Mammary epithelial cell (primary cell): ENCODE measurements at regions of chr5 and their contacts with region 1.

Region 1: DNA sequence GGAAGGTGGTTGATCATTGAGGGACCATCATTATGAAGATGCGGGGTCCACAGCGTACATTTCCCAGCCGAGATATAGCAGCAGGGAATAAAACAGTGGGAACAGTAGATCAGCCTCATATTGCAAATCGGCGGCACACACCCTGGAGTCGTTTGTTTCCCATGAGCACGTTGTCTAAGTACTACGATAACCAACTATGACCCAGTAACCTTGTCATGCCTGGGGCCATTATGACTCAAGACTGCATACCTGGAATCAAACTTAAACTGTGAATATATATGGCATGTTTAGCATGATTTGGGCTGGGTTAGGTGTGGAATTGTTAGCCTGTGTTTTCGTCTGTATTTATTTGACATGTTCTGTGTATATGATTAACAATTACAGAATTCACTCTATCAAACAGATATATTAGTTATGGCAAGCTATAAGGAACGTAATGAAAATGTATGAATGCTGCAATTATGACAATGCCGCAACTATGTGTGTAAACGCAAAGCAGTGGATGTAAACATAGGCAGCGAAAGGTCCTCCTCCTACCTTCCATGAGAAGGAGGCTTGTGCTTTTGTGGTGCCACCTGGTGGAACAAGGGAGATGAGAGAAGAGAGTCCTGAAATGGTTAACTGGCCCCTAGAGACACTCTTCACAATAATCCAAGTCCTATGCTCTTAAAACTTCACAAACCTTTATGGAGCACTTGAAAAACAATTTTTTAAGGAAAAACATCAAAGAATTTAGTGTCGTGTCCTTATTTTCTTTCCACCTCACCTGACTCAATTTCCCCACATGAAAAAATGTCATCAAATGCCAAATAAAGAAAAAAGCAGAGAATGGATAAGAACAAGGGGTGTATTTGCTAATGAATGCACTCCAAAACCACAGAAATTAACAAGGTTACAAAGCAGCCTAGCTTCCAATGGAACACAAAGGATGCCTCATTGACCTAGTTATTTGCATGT is 47.1 kb downstream of the SEMA5A start:
- DNase-seq: peak; percentile 47
- H3K4me3 ChIP-seq: no peak overlapping the region
- H3K27ac ChIP-seq: no peak overlapping the region
- H3K4me1 ChIP-seq: no peaks in the 10 kb centered on the region
- H3K27me3 ChIP-seq: no peaks in the 10 kb centered on the region
- CTCF ChIP-seq: peak; percentile 52 to 80

Region 2: GRCh38 chr5:9156282-9156681 is 342.5 kb before region 1 on chr5:
- CTCF ChIA-PET with region 1: no interaction called
- dilution Hi-C with region 1: no loop called
- in situ Hi-C with region 1: no loop called
- intact Hi-C with region 1: loop called (anchors 1 kb)
- DNase-seq: peak; percentile 46
- H3K4me3 ChIP-seq: no peak overlapping the region
- H3K27ac ChIP-seq: no peak overlapping the region
- H3K4me1 ChIP-seq: no peaks in the 10 kb centered on the region
- H3K27me3 ChIP-seq: no peaks in the 10 kb centered on the region
- CTCF ChIP-seq: peak; percentile 62 to 81

Region 3: GRCh38 chr5:9297134-9297533 is 201.7 kb before region 1 on chr5:
- CTCF ChIA-PET with region 1: interaction called, 11 read pairs
- dilution Hi-C with region 1: no loop called
- in situ Hi-C with region 1: no loop called
- intact Hi-C with region 1: no loop called
- DNase-seq: peak; percentile 9
- H3K4me3 ChIP-seq: no peak overlapping the region
- H3K27ac ChIP-seq: no peak overlapping the region
- H3K4me1 ChIP-seq: peaks cover 3% of the 10 kb centered on the region
- H3K27me3 ChIP-seq: no peaks in the 10 kb centered on the region
- CTCF ChIP-seq: no peak

Region 4: GRCh38 chr5:9361835-9362234 is 137.0 kb before region 1 on chr5:
- CTCF ChIA-PET with region 1: no interaction called
- dilution Hi-C with region 1: no loop called
- in situ Hi-C with region 1: no loop called
- intact Hi-C with region 1: loop called (anchors 1 kb)
- DNase-seq: peak; percentile 66
- H3K4me3 ChIP-seq: no peak overlapping the region
- H3K27ac ChIP-seq: no peak overlapping the region
- H3K4me1 ChIP-seq: peaks cover 11% of the 10 kb centered on the region
- H3K27me3 ChIP-seq: no peaks in the 10 kb centered on the region
- CTCF ChIP-seq: peak; percentile 85 to 92

Region 5: DNA sequence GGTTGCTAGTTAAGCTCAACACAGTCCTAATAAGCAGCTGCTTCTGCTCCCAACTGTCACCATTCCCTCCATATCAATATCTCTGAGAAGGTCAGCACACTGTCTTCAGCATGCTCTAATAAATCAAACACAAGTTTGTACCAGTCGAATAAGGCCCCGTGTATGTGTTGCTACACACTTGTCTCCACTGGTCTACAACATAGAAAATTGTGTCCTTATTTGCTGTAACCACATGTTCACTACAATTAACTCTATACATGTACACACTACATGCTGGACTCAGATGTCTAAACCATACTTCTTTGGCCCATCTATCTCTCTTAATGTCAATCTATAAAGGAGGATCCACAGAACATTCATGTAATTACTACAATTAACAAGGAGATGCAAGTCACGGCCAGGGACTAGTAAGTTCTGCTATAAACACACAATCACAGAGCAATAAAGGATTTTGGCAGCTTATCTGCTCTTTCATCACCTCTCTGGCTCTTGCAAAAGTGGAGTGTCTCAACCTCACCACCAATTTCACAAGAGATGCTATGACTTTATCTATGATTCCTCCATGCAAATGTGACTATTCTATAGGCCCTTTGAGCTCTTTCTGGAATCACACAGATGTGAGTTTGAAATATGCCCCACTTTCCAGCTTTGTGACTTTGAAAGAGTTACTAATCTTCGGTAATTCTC is 96.9 kb before region 1 on chr5:
- CTCF ChIA-PET with region 1: interaction called, 11 read pairs
- dilution Hi-C with region 1: no loop called
- in situ Hi-C with region 1: no loop called
- intact Hi-C with region 1: no loop called
- DNase-seq: peak; percentile 45
- H3K4me3 ChIP-seq: no peak overlapping the region
- H3K27ac ChIP-seq: no peak overlapping the region
- H3K4me1 ChIP-seq: no peaks in the 10 kb centered on the region
- H3K27me3 ChIP-seq: no peaks in the 10 kb centered on the region
- CTCF ChIP-seq: no peak

Region 6: GRCh38 chr5:9534881-9535517 is 36.2 kb after region 1 on chr5:
- CTCF ChIA-PET with region 1: no interaction called
- dilution Hi-C with region 1: no loop called
- in situ Hi-C with region 1: no loop called
- intact Hi-C with region 1: no loop called
- DNase-seq: peak; percentile 50
- H3K4me3 ChIP-seq: peak overlapping the region in 1 of 3 experiments; percentile 20
- H3K27ac ChIP-seq: no peak overlapping the region
- H3K4me1 ChIP-seq: peaks cover 28% of the 10 kb centered on the region
- H3K27me3 ChIP-seq: no peaks in the 10 kb centered on the region
- CTCF ChIP-seq: no peak